ENCODE measurements at regions of chr10 and their contacts with region 1.

Region 1: DNA sequence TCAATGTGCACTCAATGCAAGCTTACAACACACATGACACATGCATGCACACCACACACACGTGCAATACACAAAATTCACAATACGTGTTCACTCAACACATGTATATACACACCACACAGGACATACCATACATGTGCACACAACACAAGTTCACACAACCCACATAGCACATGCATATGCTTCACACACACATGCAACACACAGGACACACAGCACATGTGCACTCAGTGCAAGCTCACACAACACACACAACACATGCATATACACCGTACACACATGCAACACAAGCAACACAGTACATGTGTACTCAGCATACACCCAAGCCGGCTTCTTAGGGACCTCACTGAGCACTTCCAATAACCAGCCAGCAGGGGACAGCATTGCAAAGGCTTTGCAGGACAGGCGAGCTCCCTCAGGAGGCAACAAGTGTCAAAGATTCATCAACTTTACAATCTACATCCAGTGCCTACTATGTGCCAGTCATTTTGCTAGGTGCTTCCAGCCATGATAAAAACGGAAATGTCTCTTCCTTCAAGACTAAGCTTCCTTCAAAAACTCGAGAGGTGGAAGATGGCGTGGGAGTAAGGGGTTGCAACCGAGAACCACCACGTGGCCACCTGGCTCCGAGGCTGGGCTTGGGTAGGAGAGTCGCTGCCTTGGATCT is 61.1 kb downstream of the JCAD start:
- DNase-seq: peak; percentile 86
- H3K4me3 ChIP-seq: no peak overlapping the region
- H3K27ac ChIP-seq: no peak overlapping the region
- H3K4me1 ChIP-seq: peaks cover 0 to 30% (median 9%) of the 10 kb centered on the region in 6 donors
- H3K27me3 ChIP-seq: peaks cover 0 to 33% (median 0%) of the 10 kb centered on the region in 7 donors
- CTCF ChIP-seq: peak; percentile 81 to 96 (median 90)
- POLR2A ChIP-seq: no peak

Region 2: GRCh38 chr10:28975891-28976531 is 1022.3 kb before region 1 on chr10:
- intact Hi-C with region 1: no loop called
- DNase-seq: no peak
- H3K4me3 ChIP-seq: no peak overlapping the region
- H3K27ac ChIP-seq: no peak overlapping the region
- H3K4me1 ChIP-seq: no peaks in the 10 kb centered on the region
- H3K27me3 ChIP-seq: no peaks in the 10 kb centered on the region
- CTCF ChIP-seq: no peak
- POLR2A ChIP-seq: no peak

Region 3: DNA sequence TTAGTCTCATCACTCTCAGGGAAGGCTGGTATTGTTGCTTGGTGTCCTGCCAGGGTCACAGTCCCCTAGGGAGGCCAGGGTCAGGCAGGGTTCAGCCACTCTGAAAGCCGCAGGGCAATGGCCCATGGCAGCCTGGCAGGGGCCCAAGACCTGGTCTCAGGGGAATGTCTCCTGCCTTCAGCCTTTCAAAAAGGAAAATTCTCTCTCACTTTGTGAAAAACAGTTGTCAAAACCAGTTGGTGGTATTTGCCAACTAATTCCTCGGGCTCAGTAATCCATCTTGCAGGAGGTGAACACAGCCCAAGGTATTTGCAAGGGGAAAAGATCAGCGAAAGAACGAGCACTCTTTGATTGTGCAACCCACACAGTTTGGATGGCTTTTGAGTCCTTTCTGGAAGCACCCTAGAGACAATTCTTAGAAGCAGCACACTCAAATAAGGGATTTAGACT is 40.3 kb before region 1 on chr10:
- intact Hi-C with region 1: no loop called
- DNase-seq: no peak
- H3K4me3 ChIP-seq: no peak overlapping the region
- H3K27ac ChIP-seq: no peak overlapping the region
- H3K4me1 ChIP-seq: peaks cover 0 to 3% (median 0%) of the 10 kb centered on the region in 6 donors
- H3K27me3 ChIP-seq: peaks cover 0 to 6% (median 0%) of the 10 kb centered on the region in 7 donors
- CTCF ChIP-seq: no peak
- POLR2A ChIP-seq: no peak

Region 4: DNA sequence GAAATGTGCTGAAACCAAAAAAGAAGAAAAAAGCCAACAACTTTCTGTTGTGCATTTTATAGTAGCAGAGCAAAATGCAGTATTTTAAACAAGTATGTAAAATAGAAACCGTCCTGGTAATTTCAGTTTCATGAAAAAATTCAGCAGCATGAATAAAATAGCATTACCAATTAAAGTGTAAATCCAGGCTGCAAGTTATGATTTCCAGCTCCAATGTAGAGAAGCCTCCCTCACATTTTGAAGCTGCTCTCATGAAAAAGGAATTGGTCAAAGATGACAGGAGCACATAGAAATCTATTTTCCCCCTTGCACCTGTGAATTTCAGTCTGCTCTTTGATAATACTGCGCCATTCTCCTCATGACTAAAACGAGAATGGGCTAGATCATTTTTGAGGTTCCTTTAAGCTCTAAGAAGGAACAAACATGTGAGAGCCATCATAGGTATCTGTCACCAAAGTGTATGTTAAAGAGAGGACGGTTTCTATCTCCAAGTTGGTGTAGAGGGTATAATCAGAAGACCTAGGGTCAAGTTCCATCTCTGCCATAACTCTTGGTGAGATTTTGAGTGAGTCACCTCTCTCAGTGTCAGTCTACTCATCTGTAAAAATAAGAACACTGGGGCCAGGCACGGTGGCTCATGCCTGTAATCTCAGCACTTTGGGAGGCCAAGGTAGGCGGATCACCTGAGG is 243.3 kb after region 1 on chr10:
- intact Hi-C with region 1: loop called (anchors 5 kb)
- DNase-seq: no peak
- H3K4me3 ChIP-seq: no peak overlapping the region
- H3K27ac ChIP-seq: no peak overlapping the region
- H3K4me1 ChIP-seq: no peaks in the 10 kb centered on the region
- H3K27me3 ChIP-seq: no peaks in the 10 kb centered on the region
- CTCF ChIP-seq: peak in 2 of 11 experiments; percentile 1 to 7
- POLR2A ChIP-seq: no peak

Region 5: DNA sequence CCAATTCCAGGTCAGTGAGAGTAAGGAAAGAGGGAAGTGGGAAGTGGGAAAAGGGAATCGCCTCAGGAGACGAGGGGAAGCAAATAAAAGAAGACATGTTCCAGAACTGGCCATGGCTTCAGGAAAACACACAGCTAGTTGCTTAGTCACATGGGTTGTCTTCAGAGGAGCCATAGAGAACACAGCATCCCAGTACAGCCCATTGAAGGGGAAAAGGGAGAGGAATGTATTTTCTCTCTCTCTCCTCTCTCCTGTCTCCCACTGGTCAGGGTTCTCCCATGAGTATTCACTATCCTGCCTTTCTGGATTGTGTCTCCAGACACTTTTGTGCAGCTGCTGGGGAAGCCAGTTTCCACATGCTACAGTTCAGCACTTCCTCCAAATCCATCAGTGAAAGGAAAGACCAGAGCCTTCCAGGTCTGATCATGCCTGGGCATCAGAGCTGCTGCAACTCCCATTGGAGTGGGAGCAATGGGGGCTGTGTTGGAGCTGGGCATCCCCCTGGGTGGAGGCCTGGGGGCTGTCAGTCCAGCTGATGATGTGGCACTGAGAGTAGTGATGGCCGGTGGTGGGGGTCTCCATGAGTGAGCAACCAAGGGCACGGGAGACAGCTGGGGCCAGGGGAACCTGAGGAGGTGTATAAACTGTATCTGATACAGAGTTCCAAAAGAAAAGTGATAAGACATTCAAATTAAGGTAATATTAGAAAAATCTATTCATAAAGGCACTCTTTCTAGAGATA is 474.3 kb after region 1 on chr10:
- intact Hi-C with region 1: no loop called
- DNase-seq: no peak
- H3K4me3 ChIP-seq: no peak overlapping the region
- H3K27ac ChIP-seq: no peak overlapping the region
- H3K4me1 ChIP-seq: peaks cover 0 to 32% (median 13%) of the 10 kb centered on the region in 6 donors
- H3K27me3 ChIP-seq: no peaks in the 10 kb centered on the region
- CTCF ChIP-seq: no peak
- POLR2A ChIP-seq: no peak

Measured in spleen (tissue), 13 donors.